ENCODE measurements at regions of chr17 and their contacts with region 1.

Region 1: GRCh38 chr17:21214015-21214776 is at the start of gene TMEM11:
- DNase-seq: peak; percentile 97
- ATAC-seq: peak; percentile 93
- H3K4me3 Mint-ChIP-seq: peak within 1 kb of the TSS; percentile 89
- H3K27ac Mint-ChIP-seq: peak within 1 kb of the TSS; percentile 90
- H3K4me1 Mint-ChIP-seq: peaks cover 48% of the 10 kb centered on the region
- H3K27me3 Mint-ChIP-seq: no peaks in the 10 kb centered on the region
- CTCF ChIP-seq: no peak
- total RNA-seq, gene TMEM11: 21.2 and 22.2 TPM in 2 replicates

Region 2: GRCh38 chr17:21019976-21020586 is 194.1 kb before region 1 on chr17:
- CTCF ChIA-PET with region 1: interaction called, 3 read pairs
- POLR2A ChIA-PET with region 1: no interaction called
- intact Hi-C with region 1: loop called (anchors 5 kb)
- DNase-seq: no peak
- ATAC-seq: peak; percentile 79
- H3K4me3 Mint-ChIP-seq: peak overlapping the region; percentile 17
- H3K27ac Mint-ChIP-seq: peak overlapping the region; percentile 81
- H3K4me1 Mint-ChIP-seq: peaks cover 42% of the 10 kb centered on the region
- H3K27me3 Mint-ChIP-seq: no peaks in the 10 kb centered on the region
- CTCF ChIP-seq: no peak

Region 3: DNA sequence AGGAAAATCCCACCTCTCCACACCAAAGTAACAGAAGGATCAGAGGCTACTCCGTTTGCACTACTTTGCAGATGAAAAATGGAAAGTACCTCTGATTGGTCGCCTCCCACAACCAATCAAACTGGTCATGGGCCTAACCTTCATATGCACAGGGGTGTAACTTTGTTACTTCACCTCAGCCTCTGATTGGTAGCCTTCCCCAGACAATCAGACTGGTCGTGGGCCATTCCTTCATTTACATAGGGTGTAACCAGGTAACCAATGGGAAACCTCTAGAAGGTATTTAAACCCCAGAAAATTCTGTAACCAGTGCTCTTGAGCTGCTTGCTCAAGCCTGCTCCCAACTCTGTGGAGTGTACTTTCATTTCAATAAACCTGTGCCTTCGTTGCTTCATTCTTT is 132.2 kb before region 1 on chr17:
- CTCF ChIA-PET with region 1: no interaction called
- POLR2A ChIA-PET with region 1: no interaction called
- intact Hi-C with region 1: no loop called
- DNase-seq: no peak
- ATAC-seq: no peak
- H3K4me3 Mint-ChIP-seq: no peak overlapping the region
- H3K27ac Mint-ChIP-seq: no peak overlapping the region
- H3K4me1 Mint-ChIP-seq: peaks cover 4% of the 10 kb centered on the region
- H3K27me3 Mint-ChIP-seq: peaks cover 7% of the 10 kb centered on the region
- CTCF ChIP-seq: no peak

Region 4: DNA sequence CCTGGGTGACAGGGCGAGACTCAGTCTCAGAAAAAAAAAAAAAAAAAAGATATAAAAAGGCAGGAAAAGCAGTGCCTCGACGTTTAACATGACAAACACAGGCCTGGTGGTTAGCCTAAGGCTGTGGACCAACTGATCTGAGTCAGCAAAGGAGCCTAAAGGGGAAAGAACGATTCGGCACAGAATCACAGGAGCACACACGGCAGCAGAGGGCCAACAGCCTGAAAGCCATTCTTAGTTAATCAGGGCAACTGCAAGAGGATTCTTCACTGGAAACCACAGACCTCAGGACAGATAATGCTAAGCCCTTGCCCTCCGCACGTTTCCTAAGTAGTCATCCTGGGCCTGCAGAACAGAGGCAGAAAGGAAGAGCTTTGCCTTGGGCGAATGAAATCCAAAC is 14.9 kb before region 1 on chr17:
- CTCF ChIA-PET with region 1: no interaction called
- POLR2A ChIA-PET with region 1: interaction called, 10 read pairs
- intact Hi-C with region 1: no loop called
- DNase-seq: no peak
- ATAC-seq: no peak
- H3K4me3 Mint-ChIP-seq: no peak overlapping the region
- H3K27ac Mint-ChIP-seq: no peak overlapping the region
- H3K4me1 Mint-ChIP-seq: peaks cover 25% of the 10 kb centered on the region
- H3K27me3 Mint-ChIP-seq: no peaks in the 10 kb centered on the region
- CTCF ChIP-seq: no peak

Region 5: DNA sequence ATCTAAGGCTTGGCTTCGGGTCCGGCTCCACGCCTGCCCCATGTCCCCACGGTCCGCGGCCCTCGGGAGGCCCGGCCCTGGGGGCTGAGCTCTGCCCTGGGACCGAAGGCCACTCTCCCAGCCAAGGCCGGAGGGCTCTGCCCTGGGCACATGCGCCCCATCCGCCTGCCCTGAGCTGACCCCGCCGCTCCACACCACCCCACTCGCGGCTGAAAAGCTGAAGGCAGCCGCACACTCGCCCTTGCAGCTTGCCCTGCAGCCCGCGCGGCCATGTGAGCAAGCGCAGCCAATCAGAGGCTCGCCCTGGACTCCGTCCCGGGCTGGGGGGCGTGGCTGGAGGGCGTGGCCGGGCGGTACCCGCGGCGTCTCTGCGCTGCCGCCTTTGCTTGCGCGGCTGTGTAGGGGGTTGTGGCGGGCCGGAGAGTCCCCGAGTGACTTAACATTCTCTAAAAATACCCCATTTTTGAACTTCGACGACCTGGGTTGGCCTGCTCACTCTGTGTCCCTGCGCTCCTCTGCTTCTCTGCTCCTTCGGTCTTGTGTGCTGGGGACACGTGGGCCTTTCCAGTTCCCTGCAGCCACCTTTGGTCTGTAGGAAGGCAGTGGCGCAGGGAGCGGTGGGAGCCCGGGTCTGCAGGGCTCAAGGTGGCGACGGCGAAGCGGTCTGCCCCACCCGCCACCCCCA is 61.5 kb after region 1 on chr17:
- CTCF ChIA-PET with region 1: no interaction called
- POLR2A ChIA-PET with region 1: interaction called, 6 read pairs
- intact Hi-C with region 1: loop called (anchors 1 kb)
- DNase-seq: peak; percentile 99
- ATAC-seq: peak; percentile 92
- H3K4me3 Mint-ChIP-seq: peak overlapping the region; percentile 88
- H3K27ac Mint-ChIP-seq: peak overlapping the region; percentile 88
- H3K4me1 Mint-ChIP-seq: peaks cover 34% of the 10 kb centered on the region
- H3K27me3 Mint-ChIP-seq: no peaks in the 10 kb centered on the region
- CTCF ChIP-seq: no peak

Measured in activated B cell treated with CpG ODN at 0.5 μM for 24 hours (primary cell).